ENCODE measurements at regions of chr14 and their contacts with region 1.

Region 1: GRCh38 chr14:65927931-65928356 is 515.4 kb downstream of the FUT8 start:
- DNase-seq: peak; percentile 95
- ATAC-seq: peak; percentile 94
- H3K4me3 Mint-ChIP-seq: peak overlapping the region; percentile 34
- H3K27ac Mint-ChIP-seq: peak overlapping the region; percentile 75
- H3K4me1 Mint-ChIP-seq: peaks cover 48% of the 10 kb centered on the region
- H3K27me3 Mint-ChIP-seq: no peaks in the 10 kb centered on the region
- CTCF ChIP-seq: no peak

Region 2: GRCh38 chr14:65940056-65940733 is 12.3 kb after region 1 on chr14:
- CTCF ChIA-PET with region 1: interaction called, 15 read pairs
- POLR2A ChIA-PET with region 1: interaction called, 9 read pairs
- intact Hi-C with region 1: no loop called
- DNase-seq: peak; percentile 65
- ATAC-seq: peak; percentile 54
- H3K4me3 Mint-ChIP-seq: no peak overlapping the region
- H3K27ac Mint-ChIP-seq: no peak overlapping the region
- H3K4me1 Mint-ChIP-seq: peaks cover 52% of the 10 kb centered on the region
- H3K27me3 Mint-ChIP-seq: no peaks in the 10 kb centered on the region
- CTCF ChIP-seq: peak; percentile 33

Region 3: GRCh38 chr14:65949711-65950516 is 22.0 kb after region 1 on chr14:
- CTCF ChIA-PET with region 1: interaction called, 5 read pairs
- POLR2A ChIA-PET with region 1: interaction called, 14 read pairs
- intact Hi-C with region 1: no loop called
- DNase-seq: peak; percentile 86
- ATAC-seq: peak; percentile 88
- H3K4me3 Mint-ChIP-seq: peak overlapping the region; percentile 9
- H3K27ac Mint-ChIP-seq: peak overlapping the region; percentile 91
- H3K4me1 Mint-ChIP-seq: peaks cover 32% of the 10 kb centered on the region
- H3K27me3 Mint-ChIP-seq: peaks cover 4% of the 10 kb centered on the region
- CTCF ChIP-seq: no peak

Measured in activated CD8-positive, alpha-beta T cell treated with anti-CD3 and anti-CD28 coated beads for 36 hours (primary cell).